ENCODE measurements at regions of chr11 and their contacts with region 1.

Region 1: GRCh38 chr11:86955361-86956120 is at the start of gene FZD4:
- DNase-seq: peak; percentile 71 to 98 (median 89)

Region 2: DNA sequence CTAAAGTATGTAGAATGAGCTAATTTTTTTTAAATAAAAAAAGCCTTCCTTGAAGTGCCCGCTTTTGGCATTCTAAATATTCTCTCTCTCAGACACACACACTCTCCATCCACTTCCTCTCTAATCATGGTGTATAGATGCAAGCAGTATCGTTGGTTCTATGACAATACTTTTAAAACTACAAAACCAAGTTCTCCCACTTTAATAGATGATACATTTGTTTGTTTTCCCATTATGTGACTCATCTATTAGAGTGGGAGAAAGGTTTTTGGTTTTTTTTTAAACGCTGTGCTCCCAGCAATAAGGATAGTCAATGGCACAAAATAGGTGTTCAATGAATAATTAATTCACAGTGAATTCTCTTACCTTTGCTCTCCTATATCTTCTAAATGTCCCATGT is 44.9 kb before region 1 on chr11:
- intact Hi-C with region 1: no loop called
- DNase-seq: no peak

Region 3: GRCh38 chr11:87037450-87038234 is 82.1 kb after region 1 on chr11 and contains the start of gene TMEM135:
- intact Hi-C with region 1: loop called (anchors 5 kb)
- DNase-seq: peak; percentile 86 to 99 (median 93)

Measured in posterior cingulate gyrus (tissue), 11 donors.